Vagina (tissue), 2 donors: ENCODE measurements at regions of chr4 and their contacts with region 1.

Region 1: GRCh38 chr4:102449751-102450352 is 51.3 kb upstream of the NFKB1 start:
- DNase-seq: no peak
- H3K4me3 ChIP-seq: no peak overlapping the region
- H3K27ac ChIP-seq: no peak overlapping the region
- H3K4me1 ChIP-seq: no peaks in the 10 kb centered on the region
- H3K27me3 ChIP-seq: no peaks in the 10 kb centered on the region
- CTCF ChIP-seq: peak; percentile 36 to 64 (median 61)
- POLR2A ChIP-seq: no peak

Region 2: DNA sequence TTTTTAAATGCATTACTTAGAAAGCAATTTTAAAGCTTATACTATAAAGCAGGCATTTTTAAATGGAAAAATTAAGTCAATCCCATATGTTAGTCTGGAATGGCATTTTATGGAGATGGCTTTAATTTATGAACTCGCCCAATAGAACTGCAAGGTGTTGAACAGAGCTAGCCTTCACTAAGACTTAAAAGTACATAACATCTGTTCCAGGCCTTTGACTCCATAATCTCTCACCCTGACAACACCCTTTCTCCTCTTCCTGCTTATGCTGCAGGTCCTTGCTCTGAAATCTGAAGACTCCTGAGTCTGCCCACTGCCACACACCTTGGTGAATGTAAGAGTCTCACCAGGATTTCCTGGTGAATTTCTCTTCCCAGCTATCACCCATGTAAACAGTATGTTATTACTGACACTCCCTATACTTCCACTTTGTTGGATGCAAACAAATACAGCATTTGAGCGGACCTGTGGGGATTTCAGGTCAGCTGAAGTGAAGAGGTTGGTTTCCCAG is 86.9 kb before region 1 on chr4:
- intact Hi-C with region 1: no loop called
- DNase-seq: no peak
- H3K4me3 ChIP-seq: no peak overlapping the region
- H3K27ac ChIP-seq: no peak overlapping the region
- H3K4me1 ChIP-seq: no peaks in the 10 kb centered on the region
- H3K27me3 ChIP-seq: no peaks in the 10 kb centered on the region
- CTCF ChIP-seq: no peak
- POLR2A ChIP-seq: no peak

Region 3: GRCh38 chr4:102647117-102647516 is 197.3 kb after region 1 on chr4:
- intact Hi-C with region 1: no loop called
- DNase-seq: no peak
- H3K4me3 ChIP-seq: no peak overlapping the region
- H3K27ac ChIP-seq: no peak overlapping the region
- H3K4me1 ChIP-seq: no peaks in the 10 kb centered on the region
- H3K27me3 ChIP-seq: no peaks in the 10 kb centered on the region
- CTCF ChIP-seq: no peak
- POLR2A ChIP-seq: no peak

Region 4: DNA sequence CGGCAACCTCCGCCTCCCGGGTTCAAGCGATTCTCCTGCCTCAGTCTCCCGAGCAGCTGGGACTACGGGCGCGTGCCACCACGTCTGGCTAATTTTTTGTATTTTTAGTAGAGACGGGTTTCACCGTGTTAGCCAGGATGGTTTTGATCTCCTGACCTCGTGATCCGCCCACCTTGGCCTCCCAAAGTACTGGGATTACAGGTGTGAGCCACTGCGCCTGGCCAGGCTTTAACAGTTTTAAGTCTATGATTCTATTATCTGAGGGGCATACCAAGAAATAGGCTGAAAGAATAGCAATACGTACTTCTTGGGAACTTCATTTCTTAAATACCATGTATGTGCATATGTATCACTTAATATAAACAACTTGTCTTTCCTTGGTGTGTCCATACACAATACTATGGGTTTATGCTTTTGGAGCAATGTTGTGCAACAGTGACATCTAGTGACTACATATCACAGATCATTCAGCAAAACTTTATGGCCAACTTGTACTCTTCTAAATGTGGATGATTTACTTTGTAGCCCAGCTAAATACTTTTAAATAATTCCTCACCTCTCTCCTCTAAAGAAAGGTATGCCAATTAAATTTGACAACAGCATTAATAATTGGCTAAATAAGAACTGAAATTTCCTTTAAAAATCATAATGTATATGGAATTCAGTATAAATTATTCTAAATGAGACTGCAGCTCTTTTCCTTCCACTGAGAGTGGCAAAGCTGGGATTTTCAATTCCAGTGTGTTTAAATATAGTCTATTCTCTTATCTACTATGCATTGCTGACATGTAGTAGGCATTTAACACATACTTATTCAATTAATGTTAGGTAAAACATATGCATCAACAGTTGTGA is 559.2 kb after region 1 on chr4:
- intact Hi-C with region 1: loop called (anchors 10 kb)
- DNase-seq: no peak
- H3K4me3 ChIP-seq: no peak overlapping the region
- H3K27ac ChIP-seq: no peak overlapping the region
- H3K4me1 ChIP-seq: peaks cover 14% of the 10 kb centered on the region
- H3K27me3 ChIP-seq: no peaks in the 10 kb centered on the region
- CTCF ChIP-seq: peak; percentile 33 to 63 (median 42)
- POLR2A ChIP-seq: no peak

Region 5: DNA sequence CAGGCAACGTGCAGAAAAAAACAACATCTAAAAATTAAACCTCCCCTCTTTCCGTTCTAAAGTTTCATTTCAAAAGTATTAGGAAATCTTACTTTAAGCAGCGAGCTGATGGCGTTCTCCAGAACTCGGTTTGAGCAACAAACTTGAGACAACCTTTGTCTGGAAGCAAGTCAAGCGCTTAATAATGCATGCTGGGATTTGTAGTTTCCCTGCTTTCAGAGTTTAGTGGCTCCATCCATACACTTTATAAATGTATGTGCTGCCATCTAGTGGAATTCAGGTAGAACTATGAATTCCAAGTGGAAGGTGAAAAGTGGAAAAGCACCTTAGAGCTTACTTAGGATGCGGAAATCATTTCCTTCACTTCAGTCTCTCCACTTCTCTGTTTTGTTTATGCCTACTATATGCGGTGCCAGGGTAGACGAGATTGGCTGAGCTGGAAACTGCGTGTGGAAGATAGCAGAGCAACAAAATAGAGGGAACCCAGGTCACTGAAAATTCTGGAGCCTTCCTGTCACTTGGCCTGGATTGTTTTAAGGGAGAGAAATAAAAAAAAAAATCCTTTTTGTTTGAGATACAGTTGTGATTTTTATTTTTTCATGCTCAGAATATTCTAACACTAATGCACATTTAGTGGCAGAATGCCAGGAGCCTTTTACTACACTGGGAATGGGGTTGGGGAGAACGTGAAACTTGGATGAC is 650.0 kb after region 1 on chr4 and contains the start of gene BDH2:
- intact Hi-C with region 1: loop called (anchors 10 kb)
- DNase-seq: no peak
- H3K4me3 ChIP-seq: peak within 1 kb of the TSS; percentile 28 to 56
- H3K27ac ChIP-seq: peak within 1 kb of the TSS; percentile 85
- H3K4me1 ChIP-seq: peaks cover 21% of the 10 kb centered on the region
- H3K27me3 ChIP-seq: no peaks in the 10 kb centered on the region
- CTCF ChIP-seq: peak; percentile 65 to 90 (median 81)
- POLR2A ChIP-seq: peak in 1 of 2 donors; percentile 47
- total RNA-seq, gene BDH2: 42.0 TPM